Breast epithelium (tissue), 4 donors: ENCODE measurements at regions of chr4 and their contacts with region 1.

Region 1: GRCh38 chr4:7392438-7393421 is 42.0 kb downstream of the PSAPL1 start:
- DNase-seq: peak; percentile 13 to 40
- H3K4me3 ChIP-seq: no peak overlapping the region
- H3K27ac ChIP-seq: no peak overlapping the region
- H3K4me1 ChIP-seq: no peaks in the 10 kb centered on the region
- H3K27me3 ChIP-seq: peaks cover 0 to 39% of the 10 kb centered on the region in 2 donors
- CTCF ChIP-seq: no peak
- POLR2A ChIP-seq: no peak

Region 2: GRCh38 chr4:6848717-6849305 is 543.9 kb before region 1 on chr4:
- intact Hi-C with region 1: loop called (anchors 5 kb)
- DNase-seq: no peak
- H3K4me3 ChIP-seq: no peak overlapping the region
- H3K27ac ChIP-seq: no peak overlapping the region
- H3K4me1 ChIP-seq: no peaks in the 10 kb centered on the region
- H3K27me3 ChIP-seq: no peaks in the 10 kb centered on the region
- CTCF ChIP-seq: no peak
- POLR2A ChIP-seq: no peak